ENCODE measurements at regions of chr2 and their contacts with region 1.

Region 1: GRCh38 chr2:163171786-163172531 is 333.4 kb upstream of the KCNH7 start:
- DNase-seq: no peak
- H3K4me3 ChIP-seq: no peak overlapping the region
- H3K27ac ChIP-seq: no peak overlapping the region
- H3K4me1 ChIP-seq: peaks cover 0 to 3% of the 10 kb centered on the region in 2 experiments; a peak in 2 of 4 replicates
- H3K27me3 ChIP-seq: no peaks in the 10 kb centered on the region
- CTCF ChIP-seq: no peak
- EP300 ChIP-seq: no peak
- RAD21 ChIP-seq: no peak

Region 2: DNA sequence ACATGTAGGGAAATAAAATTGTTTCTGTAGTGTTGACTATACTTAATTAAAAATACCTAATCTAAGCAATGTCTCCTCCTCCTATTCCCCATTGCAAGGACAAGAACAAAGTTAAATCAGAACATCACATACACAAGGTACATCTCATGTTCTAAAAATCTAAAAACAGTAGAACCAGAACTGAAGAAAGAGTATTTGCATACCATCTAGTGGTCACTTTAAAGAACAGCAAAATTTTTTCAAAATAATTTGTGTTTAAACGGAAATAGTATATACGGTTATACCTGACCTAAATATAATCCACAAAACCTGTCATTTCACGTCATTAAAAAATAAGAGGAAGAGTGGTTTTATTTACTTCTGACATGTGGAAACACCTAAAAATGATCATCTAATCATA is 39.1 kb before region 1 on chr2:
- CTCF ChIA-PET with region 1: no interaction called
- POLR2A ChIA-PET with region 1: no interaction called
- DNase-seq: peak; percentile 2
- H3K4me3 ChIP-seq: no peak overlapping the region; a peak in 1 of 4 replicates
- H3K27ac ChIP-seq: no peak overlapping the region
- H3K4me1 ChIP-seq: no peaks in the 10 kb centered on the region
- H3K27me3 ChIP-seq: no peaks in the 10 kb centered on the region
- CTCF ChIP-seq: peak; percentile 70
- EP300 ChIP-seq: no peak
- RAD21 ChIP-seq: peak; percentile 70

Region 3: DNA sequence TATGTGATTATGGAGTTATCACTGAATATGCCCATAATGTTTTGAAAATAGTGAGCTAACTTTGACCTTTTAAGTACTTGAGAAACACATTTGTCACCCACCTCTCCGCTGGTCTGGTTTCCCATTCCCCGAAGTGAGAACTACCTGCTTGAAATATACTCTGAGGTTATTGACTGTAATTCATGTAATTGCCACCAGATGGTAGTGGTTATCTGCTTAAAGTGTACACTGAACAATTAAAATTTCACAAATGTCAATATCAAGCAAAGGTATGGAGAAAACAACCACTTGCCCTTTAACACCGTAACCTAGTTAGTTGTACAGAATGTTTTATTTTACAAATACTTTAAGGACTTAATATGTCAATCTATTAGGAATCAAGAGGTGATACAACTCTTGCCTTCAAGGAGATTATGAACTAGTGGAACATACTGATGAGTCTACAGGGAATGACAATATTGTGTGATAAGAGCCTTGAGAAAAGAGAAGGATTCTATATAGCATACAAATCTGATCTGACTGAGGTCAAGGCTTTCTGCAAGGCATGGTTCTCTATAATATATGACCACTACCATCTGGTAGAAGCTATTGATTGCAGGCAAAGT is 16.6 kb before region 1 on chr2:
- CTCF ChIA-PET with region 1: interaction called, 13 read pairs
- POLR2A ChIA-PET with region 1: no interaction called
- DNase-seq: peak; percentile 33
- H3K4me3 ChIP-seq: no peak overlapping the region
- H3K27ac ChIP-seq: no peak overlapping the region
- H3K4me1 ChIP-seq: peaks cover 0 to 3% of the 10 kb centered on the region in 2 experiments; a peak in 1 of 4 replicates
- H3K27me3 ChIP-seq: no peaks in the 10 kb centered on the region
- CTCF ChIP-seq: peak; percentile 73
- EP300 ChIP-seq: no peak
- RAD21 ChIP-seq: peak; percentile 71

Region 4: GRCh38 chr2:163505281-163505680 is 333.3 kb after region 1 on chr2:
- CTCF ChIA-PET with region 1: no interaction called
- POLR2A ChIA-PET with region 1: no interaction called
- DNase-seq: no peak
- H3K4me3 ChIP-seq: no peak overlapping the region
- H3K27ac ChIP-seq: no peak overlapping the region
- H3K4me1 ChIP-seq: no peaks in the 10 kb centered on the region
- H3K27me3 ChIP-seq: no peaks in the 10 kb centered on the region
- CTCF ChIP-seq: no peak
- EP300 ChIP-seq: no peak
- RAD21 ChIP-seq: no peak

Region 5: GRCh38 chr2:163812926-163813520 is 641.1 kb after region 1 on chr2:
- CTCF ChIA-PET with region 1: no interaction called
- POLR2A ChIA-PET with region 1: no interaction called
- DNase-seq: no peak
- H3K4me3 ChIP-seq: no peak overlapping the region
- H3K27ac ChIP-seq: no peak overlapping the region
- H3K4me1 ChIP-seq: no peaks in the 10 kb centered on the region
- H3K27me3 ChIP-seq: no peaks in the 10 kb centered on the region
- CTCF ChIP-seq: no peak
- EP300 ChIP-seq: no peak
- RAD21 ChIP-seq: no peak

Region 6: DNA sequence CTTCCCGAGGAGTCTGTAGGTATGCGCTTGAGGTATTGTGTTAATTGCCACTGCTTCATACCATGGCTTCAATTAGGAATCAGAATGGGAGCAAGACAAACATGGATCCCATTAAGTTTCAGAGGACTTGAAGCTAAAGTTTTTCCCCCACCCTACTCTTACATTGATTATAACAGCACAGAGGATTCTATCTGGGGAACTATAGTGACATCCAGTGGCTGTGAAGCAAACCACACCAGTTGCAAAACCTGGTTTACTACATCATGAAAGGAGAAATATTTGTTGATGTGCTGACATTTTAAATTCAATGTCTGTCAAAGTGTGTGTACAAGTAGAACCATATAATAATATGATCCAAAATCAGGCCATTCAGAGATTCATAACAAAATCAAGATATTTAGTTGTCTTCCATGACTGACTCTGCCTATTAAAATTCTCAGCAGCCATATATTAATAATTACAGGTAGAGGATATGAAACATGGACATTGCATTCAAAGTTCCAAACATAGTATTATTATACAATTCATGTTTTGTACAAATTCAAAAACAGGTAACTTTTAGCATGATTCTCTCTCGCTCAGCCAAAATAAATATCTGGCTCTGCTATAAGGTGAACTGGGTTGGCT is 1366.4 kb after region 1 on chr2:
- CTCF ChIA-PET with region 1: interaction called, 20 read pairs
- POLR2A ChIA-PET with region 1: no interaction called
- DNase-seq: peak; percentile 55
- H3K4me3 ChIP-seq: no peak overlapping the region; a peak in 1 of 4 replicates
- H3K27ac ChIP-seq: no peak overlapping the region
- H3K4me1 ChIP-seq: peaks cover 3 to 7% of the 10 kb centered on the region in 2 experiments; a peak in 3 of 4 replicates
- H3K27me3 ChIP-seq: no peaks in the 10 kb centered on the region
- CTCF ChIP-seq: peak; percentile 77
- EP300 ChIP-seq: no peak
- RAD21 ChIP-seq: peak; percentile 81

Region 7: DNA sequence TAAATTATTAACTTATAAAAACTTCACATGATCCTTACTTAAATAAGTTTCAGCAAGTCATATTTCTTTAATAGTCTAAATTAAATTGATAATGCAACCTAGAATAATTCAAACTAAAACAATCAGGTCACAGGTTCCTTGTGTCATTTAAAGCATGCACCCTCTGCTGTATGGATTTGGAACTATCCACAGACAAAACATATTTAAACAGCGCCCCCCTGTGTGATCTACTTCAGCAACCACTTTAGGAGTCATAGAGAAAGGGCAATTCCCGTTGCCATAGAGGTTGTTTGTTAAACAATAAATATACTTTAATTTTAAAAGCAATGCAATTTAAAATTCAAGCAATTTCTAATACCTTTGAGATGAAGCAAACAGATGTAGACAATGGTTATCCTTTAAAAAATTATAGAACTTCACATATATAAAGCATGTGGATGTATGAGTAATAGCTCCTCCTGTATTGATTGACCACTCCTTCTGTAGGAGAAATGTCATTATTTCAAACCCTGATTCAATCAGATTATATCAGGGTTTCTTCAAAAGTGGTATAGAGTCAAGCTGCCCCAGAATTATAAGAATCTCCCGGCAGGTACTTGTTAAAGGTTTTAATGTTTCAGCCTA is 1428.1 kb after region 1 on chr2:
- CTCF ChIA-PET with region 1: interaction called, 15 read pairs
- POLR2A ChIA-PET with region 1: no interaction called
- DNase-seq: peak; percentile 55
- H3K4me3 ChIP-seq: peak overlapping the region in 1 of 2 experiments; percentile 38; a peak in 1 of 4 replicates
- H3K27ac ChIP-seq: peak overlapping the region in 1 of 2 experiments; percentile 18; a peak in 1 of 4 replicates
- H3K4me1 ChIP-seq: no peaks in the 10 kb centered on the region
- H3K27me3 ChIP-seq: no peaks in the 10 kb centered on the region
- CTCF ChIP-seq: peak; percentile 98
- EP300 ChIP-seq: no peak
- RAD21 ChIP-seq: peak; percentile 79

Measured in SK-N-SH (cell line).